ENCODE measurements at regions of chr19 and their contacts with region 1.

Region 1: GRCh38 chr19:32224371-32225244 is 120.8 kb upstream of the ZNF507 start:
- DNase-seq: peak; percentile 54
- H3K4me3 Mint-ChIP-seq: peak overlapping the region; percentile 62
- H3K27ac Mint-ChIP-seq: no peak overlapping the region
- H3K4me1 Mint-ChIP-seq: peaks cover 14% of the 10 kb centered on the region
- H3K27me3 Mint-ChIP-seq: peaks cover 36% of the 10 kb centered on the region

Region 2: DNA sequence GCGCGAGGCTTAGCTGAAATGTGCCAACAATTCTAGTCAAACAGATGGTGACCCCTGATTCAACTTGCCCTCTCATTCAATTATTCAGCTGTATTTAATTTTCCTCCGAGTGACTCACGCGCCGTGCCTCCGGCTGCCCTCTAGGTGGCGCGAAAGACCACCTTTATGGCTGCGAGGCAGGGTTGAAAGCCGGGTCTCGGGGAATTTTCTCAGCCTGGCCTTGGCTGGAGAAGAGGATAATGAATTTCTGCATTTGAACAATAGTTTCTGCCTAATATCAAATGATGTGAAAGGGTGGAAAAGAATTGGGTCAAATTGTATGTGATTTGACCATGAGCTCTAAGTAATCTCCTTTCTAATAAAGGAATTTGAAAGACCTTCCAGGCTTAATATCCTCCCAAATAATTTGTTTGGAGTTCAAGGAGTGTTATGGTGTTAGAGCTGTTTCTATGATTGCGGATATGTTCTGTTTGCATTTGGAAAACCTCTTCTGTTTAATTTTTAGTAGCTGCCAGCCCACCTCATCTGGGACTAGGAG is 1541.5 kb before region 1 on chr19:
- CTCF ChIA-PET with region 1: interaction called, 15 read pairs
- intact Hi-C with region 1: loop called (anchors 5 kb)
- DNase-seq: peak; percentile 73
- H3K4me3 Mint-ChIP-seq: no peak overlapping the region
- H3K27ac Mint-ChIP-seq: no peak overlapping the region
- H3K4me1 Mint-ChIP-seq: no peaks in the 10 kb centered on the region
- H3K27me3 Mint-ChIP-seq: peaks cover 42% of the 10 kb centered on the region

Region 3: GRCh38 chr19:31054430-31054829 is 1170.2 kb before region 1 on chr19:
- CTCF ChIA-PET with region 1: no interaction called
- intact Hi-C with region 1: loop called (anchors 5 kb)
- DNase-seq: peak; percentile 62
- H3K4me3 Mint-ChIP-seq: no peak overlapping the region
- H3K27ac Mint-ChIP-seq: no peak overlapping the region
- H3K4me1 Mint-ChIP-seq: no peaks in the 10 kb centered on the region
- H3K27me3 Mint-ChIP-seq: peaks cover 21% of the 10 kb centered on the region

Region 4: DNA sequence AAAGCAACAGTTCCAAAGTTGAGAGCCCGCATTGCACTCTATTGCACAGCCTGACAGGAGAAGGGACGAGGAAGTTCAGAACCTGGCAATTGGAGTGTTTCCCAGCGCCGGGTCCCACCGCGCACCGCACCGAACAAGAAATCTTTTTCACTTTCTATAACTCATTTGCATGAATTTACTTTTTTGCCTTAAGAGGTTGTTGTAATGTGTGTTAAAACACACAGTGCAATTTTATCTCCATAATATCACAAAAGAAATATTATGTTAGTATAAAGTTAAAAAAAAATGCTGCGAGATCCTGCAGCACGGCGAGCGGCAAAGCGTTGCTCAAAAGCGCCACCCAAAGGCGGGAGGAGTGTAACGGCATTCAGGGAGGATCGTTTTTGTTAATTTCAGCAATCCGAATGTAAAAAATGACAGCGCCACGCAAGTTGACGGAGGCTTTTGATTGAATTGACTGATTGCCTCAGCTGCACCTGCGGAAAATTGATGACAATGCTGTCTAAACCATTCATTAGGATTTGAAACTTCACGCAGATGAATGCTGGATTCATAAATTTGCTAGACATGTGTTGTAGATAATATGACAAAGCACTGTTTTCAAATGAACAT is 182.8 kb before region 1 on chr19:
- CTCF ChIA-PET with region 1: no interaction called
- intact Hi-C with region 1: loop called (anchors 10 kb)
- DNase-seq: peak; percentile 62
- H3K4me3 Mint-ChIP-seq: no peak overlapping the region
- H3K27ac Mint-ChIP-seq: no peak overlapping the region
- H3K4me1 Mint-ChIP-seq: peaks cover 6% of the 10 kb centered on the region
- H3K27me3 Mint-ChIP-seq: peaks cover 27% of the 10 kb centered on the region

Region 5: GRCh38 chr19:32104153-32104849 is 120.3 kb before region 1 on chr19:
- CTCF ChIA-PET with region 1: no interaction called
- intact Hi-C with region 1: no loop called
- DNase-seq: no peak
- H3K4me3 Mint-ChIP-seq: no peak overlapping the region
- H3K27ac Mint-ChIP-seq: no peak overlapping the region
- H3K4me1 Mint-ChIP-seq: no peaks in the 10 kb centered on the region
- H3K27me3 Mint-ChIP-seq: peaks cover 20% of the 10 kb centered on the region